Aorta (tissue), 5 donors: ENCODE measurements at regions of chr1 and their contacts with region 1.

Region 1: GRCh38 chr1:183234660-183235476 is 48.8 kb downstream of the LAMC2 start:
- DNase-seq: peak in 1 of 2 donors; percentile 78
- ATAC-seq: peak; percentile 90
- H3K4me3 ChIP-seq: peak overlapping the region; percentile 16 to 68
- H3K27ac ChIP-seq: peak overlapping the region in 1 of 2 donors; percentile 94
- H3K4me1 ChIP-seq: no peaks in the 10 kb centered on the region
- H3K27me3 ChIP-seq: no peaks in the 10 kb centered on the region

Region 2: DNA sequence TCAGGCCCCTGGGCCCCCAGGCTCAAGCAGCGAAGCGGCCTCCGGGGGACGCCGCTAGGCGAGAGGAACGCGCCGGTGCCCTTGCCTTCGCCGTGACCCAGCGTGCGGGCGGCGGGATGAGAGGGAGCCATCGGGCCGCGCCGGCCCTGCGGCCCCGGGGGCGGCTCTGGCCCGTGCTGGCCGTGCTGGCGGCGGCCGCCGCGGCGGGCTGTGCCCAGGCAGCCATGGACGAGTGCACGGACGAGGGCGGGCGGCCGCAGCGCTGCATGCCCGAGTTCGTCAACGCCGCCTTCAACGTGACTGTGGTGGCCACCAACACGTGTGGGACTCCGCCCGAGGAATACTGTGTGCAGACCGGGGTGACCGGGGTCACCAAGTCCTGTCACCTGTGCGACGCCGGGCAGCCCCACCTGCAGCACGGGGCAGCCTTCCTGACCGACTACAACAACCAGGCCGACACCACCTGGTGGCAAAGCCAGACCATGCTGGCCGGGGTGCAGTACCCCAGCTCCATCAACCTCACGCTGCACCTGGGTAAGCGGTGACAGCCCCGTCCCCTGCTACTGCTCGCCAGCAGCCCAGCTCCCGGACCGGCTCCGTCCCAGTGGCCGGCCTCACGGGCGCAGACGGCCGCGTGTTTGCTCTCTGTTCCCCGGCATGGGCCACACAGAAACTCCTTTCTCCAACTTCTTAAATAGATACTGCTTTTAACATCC is 211.1 kb before region 1 on chr1:
- intact Hi-C with region 1: loop called in 1 of 2 experiments (anchors 5 kb)
- DNase-seq: peak; percentile 62 to 83
- ATAC-seq: peak; percentile 31
- H3K4me3 ChIP-seq: peak overlapping the region; percentile 77 to 85
- H3K27ac ChIP-seq: peak overlapping the region; percentile 60 to 98
- H3K4me1 ChIP-seq: peaks cover 0 to 4% of the 10 kb centered on the region in 2 donors
- H3K27me3 ChIP-seq: no peaks in the 10 kb centered on the region

Region 3: DNA sequence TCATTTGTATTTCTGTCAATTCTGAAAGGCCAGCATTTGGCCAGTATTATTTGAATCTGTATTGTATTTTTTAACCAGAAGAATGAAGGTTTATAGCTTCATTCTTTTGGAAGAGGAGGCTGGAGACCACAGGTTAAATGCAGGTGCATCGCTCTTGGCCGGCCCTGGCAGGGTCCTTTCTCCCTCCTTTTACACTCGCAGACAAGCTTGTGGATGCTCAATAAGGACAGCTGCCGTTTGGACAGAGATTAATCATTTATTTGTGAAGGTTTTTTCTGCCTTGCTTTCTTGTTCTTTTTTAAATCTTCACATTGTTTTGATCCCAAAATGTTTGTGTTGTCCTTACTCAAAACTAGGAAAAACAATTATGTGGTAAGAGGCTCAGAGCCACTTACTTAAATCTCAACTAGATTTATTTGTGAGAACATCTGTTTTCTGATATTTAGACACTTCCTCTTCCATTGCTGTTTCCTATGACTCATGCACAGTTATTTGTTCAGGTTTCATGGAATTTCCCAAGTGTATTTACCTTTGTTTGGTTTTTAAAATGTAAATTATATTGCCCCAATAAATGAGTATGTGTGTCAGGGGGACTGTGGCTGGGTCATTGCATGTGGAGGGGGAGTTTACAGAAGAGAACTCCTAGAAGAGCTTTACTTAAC is 95.5 kb before region 1 on chr1:
- intact Hi-C with region 1: loop called in 1 of 2 experiments (anchors 10 kb)
- DNase-seq: no peak
- ATAC-seq: no peak
- H3K4me3 ChIP-seq: no peak overlapping the region
- H3K27ac ChIP-seq: no peak overlapping the region
- H3K4me1 ChIP-seq: no peaks in the 10 kb centered on the region
- H3K27me3 ChIP-seq: no peaks in the 10 kb centered on the region

Region 4: DNA sequence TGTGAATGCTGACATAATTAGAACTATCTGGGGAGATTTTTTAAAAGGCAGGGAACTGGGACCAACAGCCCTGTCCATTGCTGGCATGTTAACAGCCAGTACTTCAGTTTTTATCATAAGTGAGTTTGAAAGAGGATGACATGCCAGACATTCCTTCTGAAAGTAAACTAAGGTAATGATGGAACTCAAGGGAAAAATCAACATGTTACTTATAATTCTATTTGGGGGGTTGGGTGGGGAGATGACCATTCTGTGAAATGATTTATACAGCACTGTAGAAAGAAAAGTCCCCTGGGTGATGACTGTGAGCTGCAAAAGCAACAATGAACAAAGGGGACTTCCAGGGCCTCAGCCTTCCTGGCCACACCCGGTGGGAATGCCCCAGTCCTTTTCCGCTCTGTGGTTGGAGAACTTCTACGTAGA is 54.2 kb before region 1 on chr1:
- intact Hi-C with region 1: loop called in 1 of 2 experiments (anchors 5 kb)
- DNase-seq: peak; percentile 76 to 83
- ATAC-seq: peak; percentile 85
- H3K4me3 ChIP-seq: no peak overlapping the region
- H3K27ac ChIP-seq: peak overlapping the region; percentile 33 to 74
- H3K4me1 ChIP-seq: peaks cover 0 to 1% of the 10 kb centered on the region in 2 donors
- H3K27me3 ChIP-seq: no peaks in the 10 kb centered on the region

Region 5: DNA sequence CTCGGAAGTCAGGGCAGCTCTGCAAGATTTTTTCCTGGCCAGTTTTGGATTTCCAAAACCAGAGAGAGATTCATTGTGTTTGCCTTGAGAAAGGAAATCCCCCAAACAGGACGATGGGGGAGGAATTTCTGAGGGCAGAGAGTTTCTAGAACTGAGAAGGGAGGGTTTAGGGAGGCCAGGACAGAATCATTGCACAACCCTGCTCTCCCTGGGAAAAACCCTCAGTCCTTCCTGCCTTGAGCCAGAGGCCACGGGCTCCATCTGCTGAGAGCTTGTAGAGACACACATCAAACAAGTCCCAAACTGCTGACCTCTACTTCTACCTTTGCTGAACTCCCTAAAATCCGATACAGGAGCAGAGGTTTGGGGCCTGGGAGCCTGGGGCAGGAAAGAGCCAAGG is 83.6 kb after region 1 on chr1:
- intact Hi-C with region 1: loop called in 1 of 2 experiments (anchors 10 kb)
- DNase-seq: peak; percentile 85 to 89
- ATAC-seq: peak; percentile 94
- H3K4me3 ChIP-seq: no peak overlapping the region
- H3K27ac ChIP-seq: peak overlapping the region; percentile 11 to 53
- H3K4me1 ChIP-seq: no peaks in the 10 kb centered on the region
- H3K27me3 ChIP-seq: no peaks in the 10 kb centered on the region